Heart left ventricle (tissue), 16 donors: ENCODE measurements at regions of chr6 and their contacts with region 1.

Region 1: DNA sequence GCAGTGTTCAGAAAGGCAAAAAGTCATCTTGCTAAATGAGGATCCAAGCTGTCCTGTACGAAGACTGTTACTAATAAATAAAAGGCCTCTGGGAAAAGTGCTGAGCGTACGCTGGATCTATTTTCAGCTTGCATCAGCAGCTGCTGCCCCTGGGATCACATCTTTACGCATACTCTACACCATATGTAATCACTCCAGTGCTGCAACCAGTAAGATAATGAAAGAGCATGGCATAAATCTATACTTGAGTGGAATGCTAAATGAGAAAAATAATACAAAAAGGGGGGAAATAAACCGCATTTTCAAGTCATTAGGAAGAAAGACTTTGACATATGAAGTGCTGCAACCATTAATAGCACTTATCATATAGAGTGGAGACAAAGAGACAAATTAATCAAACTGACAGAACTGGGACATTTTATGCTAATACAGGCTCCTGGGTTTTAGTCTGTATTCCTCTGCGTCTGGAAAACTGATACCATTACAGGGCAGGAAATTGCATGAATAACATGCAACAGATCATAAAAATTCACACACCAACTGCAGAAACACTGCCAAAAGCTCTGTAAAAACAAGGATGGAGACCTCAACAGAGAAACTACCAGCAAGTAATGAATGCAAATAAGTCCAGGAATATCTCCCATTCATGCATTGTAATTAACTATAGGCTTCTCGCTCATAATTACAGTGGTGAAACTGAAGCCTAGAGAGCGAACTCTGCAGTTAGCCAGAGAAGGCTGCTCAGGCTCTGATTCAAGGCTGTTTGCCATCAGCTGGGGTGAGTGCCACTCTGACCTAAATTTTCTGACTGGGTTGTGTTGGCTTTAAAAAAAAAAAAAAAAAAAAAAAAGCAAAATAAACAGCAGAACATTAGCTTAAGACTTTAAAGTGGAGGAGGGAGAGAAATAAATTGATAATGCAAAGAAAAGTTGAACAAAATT is 83.8 kb downstream of the GJA10 start:
- DNase-seq: peak in 3 of 5 donors; percentile 35 to 63 (median 41)
- ATAC-seq: peak; percentile 76 to 85 (median 80)
- H3K4me3 ChIP-seq: no peak overlapping the region
- H3K27ac ChIP-seq: peak overlapping the region in 7 of 12 donors; percentile 7 to 48 (median 35)
- H3K4me1 ChIP-seq: peaks cover 0 to 38% (median 12%) of the 10 kb centered on the region in 12 donors
- H3K27me3 ChIP-seq: no peaks in the 10 kb centered on the region
- CTCF ChIP-seq: no peak
- POLR2A ChIP-seq: no peak

Region 2: GRCh38 chr6:90179190-90180169 is 201.4 kb after region 1 on chr6:
- intact Hi-C with region 1: loop called in 3 of 10 experiments (anchors 5 to 10 kb)
- DNase-seq: no peak
- ATAC-seq: no peak
- H3K4me3 ChIP-seq: no peak overlapping the region
- H3K27ac ChIP-seq: no peak overlapping the region
- H3K4me1 ChIP-seq: peaks cover 4 to 47% (median 35%) of the 10 kb centered on the region in 12 donors
- H3K27me3 ChIP-seq: no peaks in the 10 kb centered on the region
- CTCF ChIP-seq: peak in 10 of 12 donors; percentile 11 to 52 (median 36)
- POLR2A ChIP-seq: no peak